Vagina (tissue), 2 donors: ENCODE measurements at regions of chrX and their contacts with region 1.

Region 1: DNA sequence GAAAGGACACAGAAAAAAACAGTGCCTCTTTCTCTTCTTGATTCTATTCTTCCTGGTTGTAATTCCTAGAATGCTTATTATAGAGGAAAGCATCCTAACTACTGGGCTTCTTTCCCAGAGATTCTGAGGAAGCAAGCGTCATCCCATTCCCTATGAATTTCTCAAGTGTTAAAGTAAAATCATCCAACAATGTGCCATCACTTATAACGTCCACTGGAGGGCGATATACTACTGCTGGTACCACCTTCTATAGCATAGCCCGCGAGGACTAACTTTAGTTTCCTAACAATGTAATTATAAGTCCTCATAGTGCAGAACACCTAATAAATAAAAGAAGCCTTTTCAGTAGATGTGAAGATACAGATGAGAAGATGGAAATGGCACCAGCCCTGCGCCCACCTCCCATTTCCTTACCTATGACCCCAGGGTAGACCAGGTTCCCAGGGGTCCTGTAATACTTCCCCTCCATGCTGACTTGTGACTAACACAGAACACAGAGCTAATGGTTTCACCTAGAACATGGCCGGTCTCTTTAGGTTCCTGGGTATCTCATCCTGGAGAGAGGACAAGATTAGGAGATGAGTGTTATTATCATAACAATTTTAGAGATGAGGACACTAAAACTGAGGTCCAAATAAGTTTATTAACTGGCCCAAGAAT is 4.2 kb downstream of the CENPVL3 start:
- DNase-seq: no peak
- H3K4me3 ChIP-seq: no peak overlapping the region
- H3K27ac ChIP-seq: no peak overlapping the region
- H3K4me1 ChIP-seq: no peaks in the 10 kb centered on the region
- H3K27me3 ChIP-seq: no peaks in the 10 kb centered on the region
- CTCF ChIP-seq: no peak
- POLR2A ChIP-seq: no peak

Region 2: DNA sequence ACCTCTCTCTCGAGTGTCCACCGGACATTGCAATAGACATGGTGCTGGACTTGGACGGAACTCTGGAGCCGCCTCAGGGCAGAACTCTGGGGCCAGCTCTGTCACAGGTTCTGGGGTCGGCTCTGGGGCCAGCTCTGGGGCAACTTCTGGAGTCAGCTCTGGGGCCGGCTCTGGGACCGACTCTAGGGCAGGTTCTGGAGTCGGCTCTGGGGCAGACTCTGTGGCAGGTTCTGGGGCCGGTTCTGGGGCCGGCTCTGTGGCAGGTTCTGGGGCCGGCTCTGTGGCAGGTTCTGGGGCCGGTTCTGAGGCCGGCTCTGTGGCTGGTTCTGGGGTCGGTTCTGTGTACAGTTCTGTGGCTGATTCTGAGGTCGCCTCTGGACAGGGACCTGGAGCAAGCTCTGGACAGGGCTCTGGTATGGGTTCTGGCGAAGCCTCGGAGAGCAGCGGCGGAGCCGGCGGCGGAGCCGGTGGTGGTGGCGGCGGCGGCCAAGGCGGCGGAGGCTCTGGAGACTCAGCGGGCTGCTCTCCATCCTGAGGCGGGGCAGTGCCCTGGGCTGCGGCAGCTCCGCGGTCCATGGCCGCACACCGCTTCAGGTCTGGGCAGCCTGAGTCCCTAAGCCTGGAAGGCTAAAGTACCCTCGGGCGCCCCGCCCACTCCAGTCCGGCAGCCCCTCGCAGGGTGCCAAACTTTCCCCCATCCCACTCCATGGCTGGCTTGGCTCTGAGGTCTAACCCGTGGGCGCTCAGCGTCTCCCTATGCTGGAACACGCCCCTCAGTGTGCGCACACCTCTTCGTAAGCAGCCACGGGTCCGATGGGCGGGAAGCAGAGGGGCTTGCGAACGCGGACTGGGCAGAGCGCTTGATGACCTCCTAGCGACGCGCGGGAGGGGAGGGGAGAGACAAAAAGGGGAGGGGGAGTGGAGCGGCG is 1144.1 kb before region 1 on chrX and contains the start of gene DGKK:
- intact Hi-C with region 1: loop called (anchors 10 kb)
- DNase-seq: no peak
- H3K4me3 ChIP-seq: peak within 1 kb of the TSS in 1 of 2 donors; percentile 8
- H3K27ac ChIP-seq: no peak within 1 kb of the TSS
- H3K4me1 ChIP-seq: no peaks in the 10 kb centered on the region
- H3K27me3 ChIP-seq: no peaks in the 10 kb centered on the region
- CTCF ChIP-seq: no peak
- POLR2A ChIP-seq: no peak
- total RNA-seq, gene DGKK: 0.49 TPM